ENCODE measurements at regions of chrX and their contacts with region 1.

Region 1: GRCh38 chrX:150572241-150572640 is 3.8 kb downstream of the MTM1 start:
- DNase-seq: no peak
- ATAC-seq: no peak
- H3K4me3 ChIP-seq: peak overlapping the region in 1 of 2 experiments; percentile 36; a peak in 2 of 4 replicates
- H3K27ac ChIP-seq: peak overlapping the region; percentile 87
- H3K4me1 ChIP-seq: peaks cover 64% of the 10 kb centered on the region
- H3K27me3 ChIP-seq: no peaks in the 10 kb centered on the region
- CTCF ChIP-seq: no peak

Region 2: GRCh38 chrX:150370589-150371312 is 201.5 kb before region 1 on chrX:
- CTCF ChIA-PET with region 1: no interaction called
- POLR2A ChIA-PET with region 1: interaction called, 11 read pairs
- in situ Hi-C with region 1: no loop called
- intact Hi-C with region 1: no loop called
- DNase-seq: no peak
- ATAC-seq: no peak
- H3K4me3 ChIP-seq: no peak overlapping the region
- H3K27ac ChIP-seq: no peak overlapping the region
- H3K4me1 ChIP-seq: peaks cover 8% of the 10 kb centered on the region; the same call in 1 of the 2 replicates
- H3K27me3 ChIP-seq: no peaks in the 10 kb centered on the region; the same call in 1 of the 2 replicates
- CTCF ChIP-seq: no peak

Measured in Panc1 (cell line).